PC-3 (cell line): ENCODE measurements at regions of chr2 and their contacts with region 1.

Region 1: GRCh38 chr2:64203858-64204632 is 59.8 kb upstream of the PELI1 start:
- DNase-seq: peak; percentile 59
- ATAC-seq: peak; percentile 37
- H3K4me3 ChIP-seq: peak overlapping the region; percentile 50
- H3K27ac ChIP-seq: peak overlapping the region; percentile 94
- H3K4me1 ChIP-seq: peaks cover 34% of the 10 kb centered on the region
- H3K27me3 ChIP-seq: no peaks in the 10 kb centered on the region
- CTCF ChIP-seq: no peak

Region 2: GRCh38 chr2:64052468-64053241 is 151.4 kb before region 1 on chr2:
- CTCF ChIA-PET with region 1: no interaction called
- POLR2A ChIA-PET with region 1: no interaction called
- intact Hi-C with region 1: loop called (anchors 1 kb)
- DNase-seq: peak; percentile 59
- ATAC-seq: peak; percentile 11; the same call in 1 of the 2 replicates
- H3K4me3 ChIP-seq: no peak overlapping the region
- H3K27ac ChIP-seq: no peak overlapping the region
- H3K4me1 ChIP-seq: peaks cover 4% of the 10 kb centered on the region; the same call in 1 of the 2 replicates
- H3K27me3 ChIP-seq: no peaks in the 10 kb centered on the region
- CTCF ChIP-seq: no peak

Region 3: GRCh38 chr2:64144057-64145013 is 59.7 kb before region 1 on chr2 and contains the start of gene PELI1:
- CTCF ChIA-PET with region 1: no interaction called
- POLR2A ChIA-PET with region 1: no interaction called
- intact Hi-C with region 1: loop called (anchors 1 kb)
- DNase-seq: peak; percentile 97
- ATAC-seq: peak; percentile 89
- H3K4me3 ChIP-seq: peak within 1 kb of the TSS; percentile 90
- H3K27ac ChIP-seq: no peak within 1 kb of the TSS
- H3K4me1 ChIP-seq: peaks cover 18% of the 10 kb centered on the region; the same call in 1 of the 2 replicates
- H3K27me3 ChIP-seq: no peaks in the 10 kb centered on the region
- CTCF ChIP-seq: peak; percentile 21; the same call in 1 of the 2 replicates
- total RNA-seq, gene PELI1: 5.6 and 10.4 TPM in 2 replicates

Region 4: GRCh38 chr2:64267699-64268098 is 63.7 kb after region 1 on chr2:
- CTCF ChIA-PET with region 1: no interaction called
- POLR2A ChIA-PET with region 1: no interaction called
- intact Hi-C with region 1: loop called (anchors 5 kb)
- DNase-seq: no peak
- ATAC-seq: no peak
- H3K4me3 ChIP-seq: no peak overlapping the region
- H3K27ac ChIP-seq: no peak overlapping the region
- H3K4me1 ChIP-seq: peaks cover 19% of the 10 kb centered on the region
- H3K27me3 ChIP-seq: no peaks in the 10 kb centered on the region
- CTCF ChIP-seq: no peak

Region 5: DNA sequence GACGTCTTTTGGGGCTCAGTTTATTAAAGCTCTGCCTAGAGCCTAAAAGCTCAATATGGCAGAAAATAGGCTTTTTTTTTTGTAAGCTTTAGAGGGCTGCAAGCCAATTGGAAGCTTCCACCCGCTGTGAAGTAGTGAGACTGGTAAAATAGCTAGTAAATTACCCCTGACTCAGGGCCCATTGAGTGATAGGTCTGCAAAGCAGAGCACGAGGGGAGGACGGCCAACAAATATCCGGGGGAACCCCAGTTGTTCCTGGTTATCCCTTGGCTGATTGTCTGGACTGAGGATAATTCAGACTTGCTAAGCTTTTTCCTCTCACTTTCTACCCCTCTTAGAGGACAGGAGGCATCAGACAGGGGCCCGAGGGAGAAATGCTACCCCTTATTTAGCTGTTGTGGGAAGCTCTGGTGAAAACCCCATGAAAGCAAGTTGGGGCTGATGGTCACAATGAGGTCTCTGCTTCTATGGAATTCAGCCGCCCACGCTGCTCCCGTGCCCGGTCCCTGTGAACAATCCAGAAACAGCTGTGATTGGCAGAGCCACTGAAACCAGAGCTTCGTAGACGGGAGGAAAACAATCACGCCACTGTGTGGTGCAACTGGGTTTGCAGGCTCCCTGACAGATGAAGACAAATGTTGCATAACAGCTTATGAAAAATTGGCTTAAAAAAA is 108.0 kb after region 1 on chr2:
- CTCF ChIA-PET with region 1: interaction called, 4 read pairs
- POLR2A ChIA-PET with region 1: no interaction called
- intact Hi-C with region 1: loop called (anchors 2 kb)
- DNase-seq: peak; percentile 88
- ATAC-seq: peak; percentile 99
- H3K4me3 ChIP-seq: peak overlapping the region; percentile 24; the same call in 1 of the 2 replicates
- H3K27ac ChIP-seq: no peak overlapping the region
- H3K4me1 ChIP-seq: peaks cover 10% of the 10 kb centered on the region
- H3K27me3 ChIP-seq: no peaks in the 10 kb centered on the region
- CTCF ChIP-seq: peak; percentile 74

Region 6: DNA sequence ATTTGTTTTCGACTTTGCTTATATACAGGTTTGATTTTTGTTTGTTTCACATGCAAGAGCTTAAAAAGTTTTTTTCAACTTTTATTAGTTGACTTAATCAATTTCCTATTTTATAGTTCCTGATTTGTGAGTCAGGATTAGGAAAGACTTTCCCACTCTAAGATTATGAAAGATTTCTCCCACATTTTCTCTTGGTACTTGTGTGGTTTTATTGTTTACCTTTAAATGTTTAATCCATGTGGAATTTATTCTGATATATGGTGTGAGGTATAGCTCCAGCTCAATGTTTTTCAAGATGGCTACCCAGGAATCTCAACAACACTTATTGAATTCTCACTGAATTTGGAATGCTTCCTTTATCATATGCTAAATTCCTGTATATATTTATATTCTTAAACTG is 132.1 kb after region 1 on chr2:
- CTCF ChIA-PET with region 1: no interaction called
- POLR2A ChIA-PET with region 1: interaction called, 11 read pairs
- intact Hi-C with region 1: no loop called
- DNase-seq: peak; percentile 74
- ATAC-seq: peak; percentile 57
- H3K4me3 ChIP-seq: no peak overlapping the region
- H3K27ac ChIP-seq: peak overlapping the region; percentile 31; the same call in 1 of the 2 replicates
- H3K4me1 ChIP-seq: peaks cover 34% of the 10 kb centered on the region
- H3K27me3 ChIP-seq: no peaks in the 10 kb centered on the region
- CTCF ChIP-seq: no peak